Posterior cingulate gyrus (tissue), 11 donors: ENCODE measurements at regions of chr19 and their contacts with region 1.

Region 1: DNA sequence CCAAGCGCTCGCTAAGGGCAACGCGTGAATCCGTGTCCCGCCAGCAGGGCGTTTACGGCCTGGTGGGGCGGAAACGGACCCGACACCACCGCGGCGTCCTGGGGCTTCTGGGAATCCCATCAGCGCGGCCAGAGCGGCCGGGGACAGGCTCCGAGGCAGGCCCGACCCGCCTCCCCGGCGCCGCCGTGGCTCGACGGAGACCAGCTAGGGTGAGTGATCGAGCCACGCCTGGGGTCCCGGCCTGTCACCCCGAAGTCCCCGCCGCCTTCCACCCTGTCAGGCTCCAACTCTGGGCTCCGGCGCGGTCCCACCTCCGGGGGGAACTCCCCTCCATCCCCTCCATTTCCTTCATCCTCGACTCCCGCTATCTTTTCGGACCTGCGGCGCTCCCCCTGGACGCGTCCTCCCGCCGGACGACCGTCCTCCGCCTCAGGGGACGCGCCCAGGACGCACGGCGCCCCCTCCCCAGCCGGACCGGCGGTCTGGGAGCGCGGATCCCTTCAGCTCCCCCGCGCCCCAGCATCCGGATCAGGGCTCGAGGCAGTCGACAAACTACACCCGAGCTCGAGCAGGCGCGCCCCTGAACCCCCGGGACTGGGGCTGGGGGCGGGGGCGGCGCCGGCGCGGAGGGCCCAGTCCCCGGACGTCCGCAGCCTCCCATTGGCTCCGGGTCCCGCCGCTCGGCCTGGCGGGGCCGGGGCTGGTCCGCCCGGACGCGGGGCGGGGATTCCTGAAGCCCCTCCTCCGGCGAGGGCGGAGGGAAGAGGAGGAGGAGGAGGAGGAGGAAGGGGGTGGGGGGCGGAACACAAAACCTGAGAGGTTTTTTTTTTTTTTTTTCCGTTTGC is 638 bp upstream of the BICRA start:
- DNase-seq: peak; percentile 86 to 99 (median 93)

Region 2: GRCh38 chr19:47697863-47698609 is 89.7 kb after region 1 on chr19:
- intact Hi-C with region 1: loop called (anchors 5 kb)
- DNase-seq: peak; percentile 74 to 97 (median 83)